ENCODE measurements at regions of chr21 and their contacts with region 1.

Region 1: DNA sequence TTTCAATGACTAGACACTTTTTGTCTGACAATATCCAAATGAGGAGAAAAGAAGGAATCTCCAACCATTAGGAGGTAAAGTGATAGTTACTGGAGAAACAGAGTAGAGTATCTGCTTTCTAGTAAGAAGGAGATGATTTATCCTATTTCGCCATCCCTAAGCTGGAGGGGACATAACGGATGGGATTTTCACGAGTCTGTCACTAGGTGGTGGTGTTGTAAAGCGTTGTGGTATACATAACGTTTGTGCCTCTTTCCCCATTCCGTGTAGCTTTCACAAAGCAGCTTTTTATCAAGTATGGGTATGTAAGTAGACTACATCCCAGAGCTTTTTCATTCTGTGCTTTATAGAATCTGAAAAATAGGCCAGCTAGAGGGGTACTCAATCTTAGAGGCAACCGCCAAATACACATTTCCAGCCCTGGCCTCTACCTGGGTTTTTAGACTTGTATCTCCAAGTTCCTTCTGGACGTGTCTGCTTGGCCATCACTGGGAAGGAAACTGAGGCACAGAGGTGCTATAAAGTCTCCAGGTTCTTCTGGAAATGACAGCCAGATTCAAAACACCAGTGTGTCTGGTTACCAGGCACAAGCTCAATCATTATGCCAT is 33.3 kb upstream of the FAM3B start:
- DNase-seq: peak; percentile 89
- H3K4me3 Mint-ChIP-seq: no peak overlapping the region
- H3K27ac Mint-ChIP-seq: no peak overlapping the region
- H3K4me1 Mint-ChIP-seq: no peaks in the 10 kb centered on the region
- H3K27me3 Mint-ChIP-seq: no peaks in the 10 kb centered on the region
- CTCF ChIP-seq: peak; percentile 82

Region 2: DNA sequence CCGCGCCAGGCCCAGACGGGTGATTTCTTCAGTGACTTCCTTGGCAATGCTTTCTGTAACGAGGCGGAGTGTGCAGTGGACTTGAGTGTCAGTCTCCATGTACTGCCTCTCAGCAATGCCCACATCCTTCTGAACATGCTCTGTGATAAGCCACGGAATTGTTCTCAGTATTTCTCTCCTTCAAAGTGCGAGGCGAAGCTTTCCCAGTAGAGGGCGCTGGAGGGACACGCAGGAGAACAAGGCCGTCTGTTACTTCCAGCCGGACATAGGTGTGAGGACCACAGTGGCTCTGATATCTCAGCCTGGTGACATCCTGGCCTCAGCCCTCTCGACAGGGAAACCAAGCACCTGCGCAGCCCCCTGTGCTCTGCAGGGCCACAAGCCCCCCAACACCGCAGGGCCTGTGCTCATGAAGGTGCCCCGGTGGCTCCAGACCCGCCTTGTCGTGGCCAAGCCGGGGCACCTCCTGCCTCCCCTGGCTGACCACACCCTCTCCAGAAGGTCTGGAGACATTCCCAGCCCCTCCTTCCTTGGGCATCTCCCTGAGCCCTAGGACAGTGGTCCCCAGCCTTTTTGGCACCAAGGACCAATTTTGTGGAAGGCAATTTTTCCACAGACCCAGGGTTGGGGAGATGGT is 161.4 kb before region 1 on chr21:
- CTCF ChIA-PET with region 1: interaction called, 5 read pairs
- POLR2A ChIA-PET with region 1: no interaction called
- intact Hi-C with region 1: loop called (anchors 1 kb)
- DNase-seq: peak; percentile 77
- H3K4me3 Mint-ChIP-seq: no peak overlapping the region
- H3K27ac Mint-ChIP-seq: no peak overlapping the region
- H3K4me1 Mint-ChIP-seq: no peaks in the 10 kb centered on the region
- H3K27me3 Mint-ChIP-seq: peaks cover 28% of the 10 kb centered on the region
- CTCF ChIP-seq: peak; percentile 88

Region 3: GRCh38 chr21:41294539-41295231 is 11.4 kb after region 1 on chr21:
- CTCF ChIA-PET with region 1: interaction called, 10 read pairs
- POLR2A ChIA-PET with region 1: no interaction called
- intact Hi-C with region 1: no loop called
- DNase-seq: no peak
- H3K4me3 Mint-ChIP-seq: no peak overlapping the region
- H3K27ac Mint-ChIP-seq: no peak overlapping the region
- H3K4me1 Mint-ChIP-seq: no peaks in the 10 kb centered on the region
- H3K27me3 Mint-ChIP-seq: peaks cover 20% of the 10 kb centered on the region
- CTCF ChIP-seq: no peak

Region 4: GRCh38 chr21:41460578-41461527 is 177.5 kb after region 1 on chr21:
- CTCF ChIA-PET with region 1: interaction called, 52 read pairs
- POLR2A ChIA-PET with region 1: no interaction called
- intact Hi-C with region 1: loop called (anchors 1 kb)
- DNase-seq: peak; percentile 57
- H3K4me3 Mint-ChIP-seq: no peak overlapping the region
- H3K27ac Mint-ChIP-seq: no peak overlapping the region
- H3K4me1 Mint-ChIP-seq: no peaks in the 10 kb centered on the region
- H3K27me3 Mint-ChIP-seq: no peaks in the 10 kb centered on the region
- CTCF ChIP-seq: peak; percentile 73

Region 5: DNA sequence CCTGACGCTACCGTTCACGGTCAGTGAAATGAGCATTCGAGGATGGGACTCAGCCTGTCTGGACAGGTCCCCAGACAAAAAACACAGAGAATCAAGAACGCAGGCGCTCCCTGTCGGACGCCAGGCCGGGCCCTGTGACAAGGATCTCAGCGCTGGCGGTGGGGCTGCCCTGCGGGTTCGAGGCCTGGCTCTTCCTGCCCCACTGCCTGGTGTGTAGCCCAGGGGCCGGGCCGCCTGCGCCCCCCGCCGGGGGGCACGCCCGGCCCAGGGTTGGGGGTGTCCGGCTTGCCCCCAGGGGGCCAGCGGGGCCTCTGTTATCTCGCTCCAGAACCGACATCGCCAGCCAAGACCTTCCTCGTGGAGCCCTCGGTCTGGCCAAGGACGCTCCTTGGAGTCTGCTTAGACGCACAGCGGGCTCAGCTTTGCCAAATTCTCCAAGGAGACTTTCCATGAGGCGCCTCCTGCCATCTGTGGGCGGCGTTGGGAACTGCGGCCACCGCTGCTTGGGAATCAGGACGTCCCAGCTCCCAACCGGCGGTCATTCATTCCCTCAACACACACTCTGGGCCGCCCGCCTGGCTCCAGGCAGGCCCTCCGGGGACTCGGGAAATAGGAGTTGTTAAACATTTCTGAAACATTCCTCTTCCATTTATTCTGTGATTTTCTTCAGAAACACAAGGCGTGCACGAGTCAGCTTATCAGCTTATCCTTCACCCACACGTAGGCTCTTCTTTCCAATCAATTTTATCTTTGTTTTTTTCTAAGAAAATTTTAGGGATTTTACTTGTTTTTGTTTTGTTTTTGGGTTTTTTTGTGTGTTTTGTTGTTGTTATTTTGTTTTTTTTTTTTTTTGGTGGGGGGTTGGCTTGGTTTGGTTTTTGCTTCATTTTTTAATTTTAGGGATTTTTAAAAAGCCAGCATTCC is 494.9 kb after region 1 on chr21:
- CTCF ChIA-PET with region 1: interaction called, 16 read pairs
- POLR2A ChIA-PET with region 1: interaction called, 5 read pairs
- intact Hi-C with region 1: loop called (anchors 10 kb)
- DNase-seq: peak; percentile 94
- H3K4me3 Mint-ChIP-seq: no peak overlapping the region
- H3K27ac Mint-ChIP-seq: peak overlapping the region; percentile 21
- H3K4me1 Mint-ChIP-seq: peaks cover 19% of the 10 kb centered on the region
- H3K27me3 Mint-ChIP-seq: no peaks in the 10 kb centered on the region
- CTCF ChIP-seq: peak; percentile 96

Region 6: DNA sequence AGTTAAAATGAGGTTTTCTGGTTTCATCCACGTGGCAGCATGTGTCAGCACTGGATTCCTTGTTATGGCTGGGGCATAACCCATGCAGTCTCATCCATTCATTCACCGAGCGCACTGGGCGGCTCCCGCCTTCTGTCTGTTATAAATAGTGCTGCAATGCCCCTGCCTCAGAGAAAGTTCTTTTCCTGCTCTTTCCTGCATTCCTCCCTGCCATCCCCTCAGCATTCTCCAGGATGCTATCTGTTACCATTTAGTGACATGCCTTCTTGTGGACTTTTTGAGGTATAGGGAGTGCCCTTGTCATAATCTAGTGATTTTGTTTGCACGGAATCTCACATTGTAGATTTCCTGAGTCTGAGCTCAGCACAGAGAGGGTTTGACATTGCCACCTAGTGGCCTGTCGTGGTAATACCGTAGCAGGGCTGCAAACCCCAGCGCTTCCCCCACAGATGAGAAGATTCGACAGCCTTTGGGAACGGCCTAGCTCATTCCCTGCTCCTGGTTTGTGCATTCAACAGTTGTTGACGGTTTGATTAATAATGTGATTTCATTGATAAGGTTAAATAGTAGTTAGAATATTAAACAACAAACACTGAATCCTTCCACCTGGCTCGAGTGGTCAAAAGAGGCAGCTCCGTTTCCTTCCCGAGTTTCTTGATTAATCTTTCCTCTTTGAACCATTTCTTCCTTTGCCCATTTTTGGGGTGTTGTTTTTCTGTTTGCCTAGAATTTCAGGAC is 834.1 kb after region 1 on chr21:
- CTCF ChIA-PET with region 1: interaction called, 7 read pairs
- POLR2A ChIA-PET with region 1: interaction called, 3 read pairs
- intact Hi-C with region 1: loop called (anchors 10 kb)
- DNase-seq: peak; percentile 67
- H3K4me3 Mint-ChIP-seq: no peak overlapping the region
- H3K27ac Mint-ChIP-seq: no peak overlapping the region
- H3K4me1 Mint-ChIP-seq: peaks cover 40% of the 10 kb centered on the region
- H3K27me3 Mint-ChIP-seq: peaks cover 48% of the 10 kb centered on the region
- CTCF ChIP-seq: peak; percentile 85